CD8-positive, alpha-beta T cell (primary cell): ENCODE measurements at regions of chr17 and their contacts with region 1.

Region 1: GRCh38 chr17:35119368-35120165 is at the start of gene RAD51D:
- DNase-seq: peak; percentile 63 to 90 (median 76)
- ATAC-seq: peak; percentile 88
- H3K4me3 ChIP-seq: peak within 1 kb of the TSS; percentile 86 to 97
- H3K4me3 Mint-ChIP-seq: peak within 1 kb of the TSS; percentile 92
- H3K27ac ChIP-seq: peak within 1 kb of the TSS; percentile 74 to 79
- H3K27ac Mint-ChIP-seq: peak within 1 kb of the TSS; percentile 95
- H3K4me1 ChIP-seq: peaks cover 25% of the 10 kb centered on the region
- H3K4me1 Mint-ChIP-seq: peaks cover 43% of the 10 kb centered on the region
- H3K27me3 ChIP-seq: no peaks in the 10 kb centered on the region
- H3K27me3 Mint-ChIP-seq: no peaks in the 10 kb centered on the region
- CTCF ChIP-seq: peak; percentile 79
- total RNA-seq, gene RAD51D: 6.9 to 8.7 TPM

Region 2: GRCh38 chr17:34420254-34420766 is 699.3 kb before region 1 on chr17:
- CTCF ChIA-PET with region 1: interaction called, 44 read pairs
- POLR2A ChIA-PET with region 1: no interaction called
- intact Hi-C with region 1: loop called in 1 of 2 experiments (anchors 1 kb)
- DNase-seq: peak; percentile 26 to 79 (median 67)
- ATAC-seq: peak; percentile 64
- H3K4me3 ChIP-seq: no peak overlapping the region
- H3K4me3 Mint-ChIP-seq: no peak overlapping the region
- H3K27ac ChIP-seq: no peak overlapping the region
- H3K27ac Mint-ChIP-seq: no peak overlapping the region
- H3K4me1 ChIP-seq: no peaks in the 10 kb centered on the region
- H3K4me1 Mint-ChIP-seq: no peaks in the 10 kb centered on the region
- H3K27me3 ChIP-seq: peaks cover 0 to 4% of the 10 kb centered on the region in 2 experiments
- H3K27me3 Mint-ChIP-seq: peaks cover 40% of the 10 kb centered on the region
- CTCF ChIP-seq: peak; percentile 96

Region 3: DNA sequence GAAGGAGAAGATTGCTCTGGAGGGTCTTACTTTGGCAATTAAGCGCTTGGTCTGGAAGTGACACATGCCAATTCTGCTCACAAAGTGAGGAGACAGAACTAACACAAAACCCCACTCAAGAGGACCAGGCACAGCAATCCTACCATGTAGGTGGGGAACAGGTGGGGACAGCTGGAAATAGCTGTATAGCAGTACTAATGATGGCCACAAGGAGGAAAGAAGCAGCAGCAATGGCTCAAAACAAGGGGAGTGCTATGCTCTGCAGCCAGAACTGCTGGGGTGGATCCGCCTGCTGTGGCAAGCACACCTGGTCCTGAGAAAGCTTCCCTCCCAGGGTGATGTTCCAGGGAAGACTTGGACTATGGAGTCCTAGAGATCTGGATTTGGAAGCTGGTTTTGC is 557.2 kb before region 1 on chr17:
- CTCF ChIA-PET with region 1: no interaction called
- POLR2A ChIA-PET with region 1: no interaction called
- intact Hi-C with region 1: loop called (anchors 5 kb)
- DNase-seq: peak in 2 of 9 experiments; percentile 35 to 51
- ATAC-seq: peak; percentile 75
- H3K4me3 ChIP-seq: no peak overlapping the region
- H3K4me3 Mint-ChIP-seq: no peak overlapping the region
- H3K27ac ChIP-seq: no peak overlapping the region
- H3K27ac Mint-ChIP-seq: no peak overlapping the region
- H3K4me1 ChIP-seq: no peaks in the 10 kb centered on the region
- H3K4me1 Mint-ChIP-seq: no peaks in the 10 kb centered on the region
- H3K27me3 ChIP-seq: peaks cover 0 to 4% of the 10 kb centered on the region in 2 experiments
- H3K27me3 Mint-ChIP-seq: peaks cover 12% of the 10 kb centered on the region
- CTCF ChIP-seq: peak; percentile 52

Region 4: DNA sequence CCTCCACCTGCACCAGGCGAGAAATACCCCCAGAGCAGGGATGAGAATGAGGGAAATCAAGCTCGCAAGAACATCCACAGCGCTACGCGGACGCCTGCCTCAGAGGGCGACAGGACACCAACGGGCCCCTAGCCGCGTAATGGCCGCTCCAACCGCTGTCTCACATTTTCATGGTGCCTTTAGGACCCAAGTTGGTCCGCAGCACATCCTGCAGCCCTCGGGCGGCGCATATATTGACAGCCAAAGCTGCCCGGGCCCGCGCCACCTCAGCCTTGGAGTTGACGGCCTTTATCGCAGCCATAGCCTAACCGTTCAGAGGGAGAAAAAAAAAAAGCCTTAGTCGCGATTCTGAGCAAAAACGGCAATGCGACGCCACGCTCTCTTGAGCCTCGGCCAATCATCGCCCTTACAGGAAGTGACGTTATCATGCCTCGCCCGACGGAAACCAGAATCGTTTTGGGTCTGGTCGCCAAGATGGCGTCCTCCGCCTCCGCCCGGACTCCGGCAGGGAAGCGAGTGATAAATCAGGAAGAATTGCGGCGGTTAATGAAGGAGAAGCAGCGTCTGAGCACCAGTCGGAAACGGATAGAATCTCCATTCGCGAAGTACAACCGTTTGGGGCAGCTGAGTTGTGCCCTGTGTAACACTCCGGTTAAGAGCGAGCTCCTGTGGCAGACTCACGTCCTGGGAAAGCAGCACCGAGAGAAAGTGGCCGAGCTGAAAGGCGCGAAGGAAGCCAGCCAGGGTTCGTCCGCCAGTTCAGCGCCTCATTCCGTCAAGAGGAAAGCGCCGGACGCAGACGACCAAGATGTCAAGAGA is 158.3 kb before region 1 on chr17 and contains the starts of genes CCT6B and ZNF830:
- CTCF ChIA-PET with region 1: no interaction called
- POLR2A ChIA-PET with region 1: no interaction called
- intact Hi-C with region 1: loop called in 1 of 2 experiments (anchors 1 kb)
- DNase-seq: peak; percentile 75 to 97 (median 92)
- ATAC-seq: peak; percentile 88
- H3K4me3 ChIP-seq: peak within 1 kb of the TSS; percentile 72 to 78
- H3K4me3 Mint-ChIP-seq: peak within 1 kb of the TSS; percentile 100
- H3K27ac ChIP-seq: peak within 1 kb of the TSS; percentile 84 to 99
- H3K27ac Mint-ChIP-seq: peak within 1 kb of the TSS; percentile 99
- H3K4me1 ChIP-seq: peaks cover 22% of the 10 kb centered on the region
- H3K4me1 Mint-ChIP-seq: peaks cover 40% of the 10 kb centered on the region
- H3K27me3 ChIP-seq: no peaks in the 10 kb centered on the region
- H3K27me3 Mint-ChIP-seq: peaks cover 6% of the 10 kb centered on the region
- CTCF ChIP-seq: no peak
- total RNA-seq, gene CCT6B: 4.0 to 5.9 TPM
- total RNA-seq, gene ZNF830: 43.6 to 45.0 TPM

Region 5: DNA sequence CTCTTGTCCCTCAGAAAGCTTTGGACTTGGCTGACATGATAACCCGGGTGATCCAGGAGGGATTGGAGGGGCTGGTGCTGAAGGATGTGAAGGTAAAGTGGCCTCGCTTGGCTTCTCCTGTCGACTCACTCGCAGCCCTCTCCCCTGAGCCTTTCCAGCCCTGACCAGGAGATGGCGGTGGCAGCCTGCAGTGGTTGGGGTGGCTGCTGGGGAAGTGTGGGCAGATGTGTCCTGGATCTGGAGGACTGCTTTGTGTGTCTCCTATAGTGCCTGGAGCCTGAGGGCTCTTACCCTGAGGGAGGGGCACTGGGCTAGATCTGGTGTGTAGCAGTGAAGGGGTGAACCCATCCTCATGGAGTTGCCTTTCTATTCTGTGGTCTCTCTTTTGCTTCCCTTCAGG is 121.4 kb before region 1 on chr17:
- CTCF ChIA-PET with region 1: interaction called, 145 read pairs
- POLR2A ChIA-PET with region 1: interaction called, 5 read pairs
- intact Hi-C with region 1: loop called in 1 of 2 experiments (anchors 1 kb)
- DNase-seq: peak; percentile 57 to 87 (median 77)
- ATAC-seq: peak; percentile 97
- H3K4me3 ChIP-seq: no peak overlapping the region
- H3K4me3 Mint-ChIP-seq: no peak overlapping the region
- H3K27ac ChIP-seq: no peak overlapping the region
- H3K27ac Mint-ChIP-seq: peak overlapping the region; percentile 76
- H3K4me1 ChIP-seq: no peaks in the 10 kb centered on the region
- H3K4me1 Mint-ChIP-seq: peaks cover 5% of the 10 kb centered on the region
- H3K27me3 ChIP-seq: no peaks in the 10 kb centered on the region
- H3K27me3 Mint-ChIP-seq: no peaks in the 10 kb centered on the region
- CTCF ChIP-seq: peak; percentile 70

Region 6: DNA sequence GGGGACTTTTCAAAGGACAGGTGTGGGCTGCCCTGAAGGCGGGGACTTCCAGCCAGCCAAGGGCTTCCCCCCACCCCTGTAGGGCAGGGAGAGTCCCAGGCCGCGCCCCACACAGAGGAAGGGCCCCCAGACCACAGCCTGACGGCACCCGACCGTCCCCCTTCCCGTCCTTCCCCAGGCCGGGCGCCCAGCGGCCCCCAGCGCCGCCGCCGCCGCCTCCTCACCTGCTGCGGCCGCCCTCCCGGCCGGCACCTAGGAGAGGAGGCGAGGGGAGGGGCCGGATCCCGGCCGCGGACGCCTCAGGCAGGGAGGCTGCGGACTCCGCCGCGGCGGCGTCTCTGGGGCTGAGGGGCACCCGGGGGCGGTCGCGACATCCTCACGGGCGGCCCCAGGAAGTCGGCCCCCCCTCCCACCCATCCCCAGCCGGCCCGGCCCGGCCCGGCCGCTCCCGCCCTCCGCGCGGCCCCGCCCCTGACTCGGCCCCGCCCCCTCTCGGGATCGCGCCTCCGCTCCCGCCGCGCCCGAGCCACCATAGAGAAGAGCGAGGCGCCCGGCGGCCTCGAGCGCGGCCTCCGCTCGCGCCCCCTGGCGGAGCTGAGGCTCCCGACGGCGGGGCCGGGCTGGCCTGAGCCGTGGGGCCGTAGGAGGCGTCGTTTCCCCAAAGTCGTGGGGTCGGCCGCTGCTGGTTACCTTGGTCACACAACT is 30.5 kb before region 1 on chr17:
- CTCF ChIA-PET with region 1: interaction called, 15 read pairs
- POLR2A ChIA-PET with region 1: interaction called, 9 read pairs
- intact Hi-C with region 1: loop called (anchors 1 kb)
- DNase-seq: peak; percentile 81 to 96 (median 91)
- ATAC-seq: peak; percentile 78
- H3K4me3 ChIP-seq: peak overlapping the region; percentile 68
- H3K4me3 Mint-ChIP-seq: peak overlapping the region; percentile 97
- H3K27ac ChIP-seq: peak overlapping the region; percentile 65 to 89
- H3K27ac Mint-ChIP-seq: peak overlapping the region; percentile 98
- H3K4me1 ChIP-seq: peaks cover 27% of the 10 kb centered on the region
- H3K4me1 Mint-ChIP-seq: peaks cover 43% of the 10 kb centered on the region
- H3K27me3 ChIP-seq: no peaks in the 10 kb centered on the region
- H3K27me3 Mint-ChIP-seq: no peaks in the 10 kb centered on the region
- CTCF ChIP-seq: peak; percentile 69